GM13977 (cell line): ENCODE measurements at regions of chr3 and their contacts with region 1.

Region 1: GRCh38 chr3:33636125-33636850 is 81.8 kb downstream of the CLASP2 start:
- DNase-seq: peak; percentile 27
- CTCF ChIP-seq: peak; percentile 51

Region 2: GRCh38 chr3:33704891-33705290 is 68.6 kb after region 1 on chr3:
- in situ Hi-C with region 1: no loop called
- DNase-seq: no peak
- CTCF ChIP-seq: no peak

Region 3: DNA sequence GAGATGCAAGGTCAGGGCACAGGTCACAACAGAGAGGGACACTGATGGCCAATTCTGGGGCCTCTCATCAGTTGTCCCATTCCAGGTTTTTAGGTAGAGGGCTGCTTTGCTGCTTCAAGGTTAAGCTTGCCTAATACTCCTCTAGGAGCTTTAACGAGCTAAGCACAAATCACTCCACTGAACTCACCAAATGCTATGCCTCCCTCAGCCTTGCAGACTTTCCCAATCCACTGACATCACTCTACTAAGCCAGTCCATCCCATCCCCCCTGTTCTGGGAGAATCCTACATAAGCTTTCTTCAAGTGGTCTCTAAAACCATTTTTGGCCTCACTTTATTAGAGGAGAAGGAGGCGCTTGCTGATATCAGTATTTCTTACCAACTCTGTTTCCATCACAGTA is 137.3 kb after region 1 on chr3:
- in situ Hi-C with region 1: loop called (anchors 5 kb)
- DNase-seq: no peak
- CTCF ChIP-seq: no peak